ENCODE measurements at regions of chr1 and their contacts with region 1.

Region 1: GRCh38 chr1:165481820-165482532 is 37.0 kb upstream of the RXRG start:
- DNase-seq: no peak
- ATAC-seq: peak; percentile 94
- H3K4me3 ChIP-seq: no peak overlapping the region
- H3K27ac ChIP-seq: no peak overlapping the region
- H3K4me1 ChIP-seq: no peaks in the 10 kb centered on the region
- H3K27me3 ChIP-seq: no peaks in the 10 kb centered on the region
- CTCF ChIP-seq: no peak

Region 2: GRCh38 chr1:165423136-165423535 is 58.8 kb before region 1 on chr1:
- CTCF ChIA-PET with region 1: no interaction called
- POLR2A ChIA-PET with region 1: interaction called, 13 read pairs
- in situ Hi-C with region 1: no loop called
- intact Hi-C with region 1: no loop called
- DNase-seq: no peak
- ATAC-seq: no peak
- H3K4me3 ChIP-seq: no peak overlapping the region
- H3K27ac ChIP-seq: no peak overlapping the region
- H3K4me1 ChIP-seq: no peaks in the 10 kb centered on the region
- H3K27me3 ChIP-seq: no peaks in the 10 kb centered on the region
- CTCF ChIP-seq: no peak

Region 3: DNA sequence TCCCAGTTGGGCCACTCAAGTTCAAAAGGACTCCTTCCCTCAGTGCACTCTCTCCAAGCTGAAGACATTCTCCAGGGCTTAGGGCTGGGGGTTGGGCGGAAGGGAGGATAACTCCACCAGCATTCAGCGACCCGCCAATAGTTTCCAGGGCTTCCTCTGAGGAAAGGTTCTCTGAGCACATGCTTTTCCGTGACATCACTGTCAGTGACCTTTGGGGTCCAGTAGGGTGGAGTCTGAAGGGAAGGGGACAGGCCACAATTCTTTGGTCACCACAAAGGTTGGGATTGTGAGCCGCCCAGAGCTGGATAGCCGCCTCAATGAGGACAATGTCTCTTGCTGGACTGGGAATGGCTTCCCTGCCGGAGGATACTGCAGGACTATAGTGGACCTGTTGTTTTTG is 14.3 kb before region 1 on chr1:
- CTCF ChIA-PET with region 1: no interaction called
- POLR2A ChIA-PET with region 1: no interaction called
- in situ Hi-C with region 1: no loop called
- intact Hi-C with region 1: no loop called
- DNase-seq: no peak
- ATAC-seq: no peak
- H3K4me3 ChIP-seq: no peak overlapping the region
- H3K27ac ChIP-seq: no peak overlapping the region
- H3K4me1 ChIP-seq: no peaks in the 10 kb centered on the region
- H3K27me3 ChIP-seq: peaks cover 4% of the 10 kb centered on the region
- CTCF ChIP-seq: no peak

Measured in Panc1 (cell line).